A673 (cell line): ENCODE measurements at regions of chr20 and their contacts with region 1.

Region 1: GRCh38 chr20:34993941-34994508 is 38.4 kb downstream of the MYH7B start:
- DNase-seq: no peak
- H3K4me3 ChIP-seq: no peak overlapping the region
- H3K27ac ChIP-seq: no peak overlapping the region
- H3K4me1 ChIP-seq: no peaks in the 10 kb centered on the region
- H3K27me3 ChIP-seq: no peaks in the 10 kb centered on the region
- CTCF ChIP-seq: no peak

Region 2: GRCh38 chr20:34980548-34981233 is 13.3 kb before region 1 on chr20:
- CTCF ChIA-PET with region 1: no interaction called
- POLR2A ChIA-PET with region 1: interaction called, 10 read pairs
- intact Hi-C with region 1: no loop called
- DNase-seq: peak; percentile 18
- H3K4me3 ChIP-seq: no peak overlapping the region
- H3K27ac ChIP-seq: no peak overlapping the region
- H3K4me1 ChIP-seq: no peaks in the 10 kb centered on the region
- H3K27me3 ChIP-seq: no peaks in the 10 kb centered on the region
- CTCF ChIP-seq: no peak

Region 3: DNA sequence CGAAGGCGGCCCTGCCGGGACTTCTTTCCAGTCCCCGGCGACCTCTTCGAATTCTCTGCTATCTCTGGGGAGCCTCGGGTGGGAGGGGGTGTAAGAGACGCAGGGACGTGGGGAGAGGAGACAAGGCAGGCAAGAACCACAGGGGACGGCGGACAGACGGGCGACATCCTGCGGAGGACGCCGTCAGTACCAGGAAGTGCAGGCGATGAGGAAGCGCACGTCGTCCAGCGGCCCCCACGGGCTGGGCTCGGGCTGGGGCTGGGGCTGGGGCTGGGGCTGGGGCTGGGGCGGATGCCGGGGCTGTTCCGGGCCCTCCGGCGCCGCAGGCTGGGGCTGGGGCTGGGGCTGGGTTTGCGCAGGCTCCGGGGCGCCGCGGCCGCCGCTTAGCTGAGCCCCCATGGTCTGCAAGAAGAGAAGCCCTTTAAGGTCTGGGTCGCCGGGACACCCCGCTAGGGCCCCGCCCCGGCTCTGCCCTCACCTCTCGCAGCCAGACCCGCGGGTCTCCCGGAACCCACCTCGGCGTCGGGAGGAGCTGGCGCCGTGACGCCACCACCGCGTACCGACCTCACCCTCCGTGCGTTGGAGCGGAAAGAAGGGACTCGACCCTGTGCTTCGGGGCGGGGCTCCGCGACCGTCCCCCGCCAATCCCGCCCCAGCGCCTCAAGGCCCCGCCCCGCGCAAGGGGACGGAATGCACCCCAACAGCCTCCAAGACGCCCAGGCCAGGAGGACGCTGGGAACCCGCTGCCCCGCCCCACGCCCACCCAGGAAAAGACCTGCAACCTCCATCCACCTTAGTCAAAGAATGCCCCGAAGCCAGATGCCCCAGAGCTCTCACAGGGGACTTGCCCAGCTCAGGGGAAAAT is 283.7 kb after region 1 on chr20 and contains the start of gene MMP24OS:
- CTCF ChIA-PET with region 1: no interaction called
- POLR2A ChIA-PET with region 1: interaction called, 12 read pairs
- intact Hi-C with region 1: no loop called
- DNase-seq: peak; percentile 94
- H3K4me3 ChIP-seq: peak within 1 kb of the TSS; percentile 75
- H3K27ac ChIP-seq: peak within 1 kb of the TSS; percentile 87
- H3K4me1 ChIP-seq: peaks cover 6% of the 10 kb centered on the region
- H3K27me3 ChIP-seq: no peaks in the 10 kb centered on the region
- CTCF ChIP-seq: 0 out of 2 replicates have a peak, but pooled peaks have one; percentile 23
- total RNA-seq, gene MMP24OS: 26.2 and 34.0 TPM in 2 replicates